Motor neuron (in vitro differentiated cells): ENCODE measurements at regions of chr2 and their contacts with region 1.

Region 1: GRCh38 chr2:152175458-152176325 is at the start of gene STAM2:
- ATAC-seq: peak; percentile 81 to 91 (median 86)
- H3K4me3 ChIP-seq: peak within 1 kb of the TSS; percentile 63 to 79 (median 67)
- H3K27ac ChIP-seq: peak within 1 kb of the TSS; percentile 99 to 100
- H3K4me1 ChIP-seq: peaks cover 3 to 13% of the 10 kb centered on the region in 2 donors
- total RNA-seq, gene STAM2: 14.3 to 43.9 (median 22.2) TPM

Region 2: GRCh38 chr2:152466980-152467676 is 291.4 kb after region 1 on chr2:
- in situ Hi-C with region 1: loop called in 1 of 9 experiments (anchors 25 kb)
- ATAC-seq: peak in 3 of 8 experiments; percentile 5 to 37 (median 9)
- H3K4me3 ChIP-seq: no peak overlapping the region
- H3K27ac ChIP-seq: no peak overlapping the region
- H3K4me1 ChIP-seq: peaks cover 22 to 29% of the 10 kb centered on the region in 2 donors

Region 3: GRCh38 chr2:152611458-152612231 is 436.0 kb after region 1 on chr2:
- in situ Hi-C with region 1: loop called in 1 of 9 experiments (anchors 25 kb)
- ATAC-seq: peak in 4 of 8 experiments; percentile 46 to 78 (median 68)
- H3K4me3 ChIP-seq: no peak overlapping the region
- H3K27ac ChIP-seq: no peak overlapping the region
- H3K4me1 ChIP-seq: no peaks in the 10 kb centered on the region

Region 4: GRCh38 chr2:153519257-153519875 is 1343.7 kb after region 1 on chr2:
- in situ Hi-C with region 1: loop called in 1 of 9 experiments (anchors 25 kb)
- ATAC-seq: peak in 6 of 8 experiments; percentile 28 to 55 (median 48)
- H3K4me3 ChIP-seq: no peak overlapping the region
- H3K27ac ChIP-seq: no peak overlapping the region
- H3K4me1 ChIP-seq: peaks cover 0 to 2% of the 10 kb centered on the region in 2 donors